ENCODE measurements at regions of chr2 and their contacts with region 1.

Region 1: GRCh38 chr2:120735746-120736170 is at the start of gene GLI2:
- DNase-seq: peak; percentile 50 to 90
- H3K4me3 ChIP-seq: peak within 1 kb of the TSS; percentile 80 to 91 (median 89)
- H3K27ac ChIP-seq: peak within 1 kb of the TSS; percentile 79; the same call in 1 of the 2 replicates
- H3K4me1 ChIP-seq: peaks cover 12 to 24% (median 16%) of the 10 kb centered on the region in 4 experiments
- H3K27me3 ChIP-seq: no peaks in the 10 kb centered on the region; a peak in 1 of 7 replicates
- CTCF ChIP-seq: peak; percentile 66 to 98 (median 83)
- EP300 ChIP-seq: no peak
- POLR2A ChIP-seq: no peak
- RAD21 ChIP-seq: peak; percentile 60 to 78
- total RNA-seq, gene GLI2: 46.9 and 49.8 TPM in 2 replicates

Region 2: GRCh38 chr2:120647491-120647890 is 88.3 kb before region 1 on chr2:
- CTCF ChIA-PET with region 1: no interaction called
- POLR2A ChIA-PET with region 1: no interaction called
- DNase-seq: no peak
- H3K4me3 ChIP-seq: no peak overlapping the region
- H3K27ac ChIP-seq: no peak overlapping the region
- H3K4me1 ChIP-seq: no peaks in the 10 kb centered on the region
- H3K27me3 ChIP-seq: peaks cover 0 to 3% (median 1%) of the 10 kb centered on the region in 4 experiments; a peak in 1 of 7 replicates
- CTCF ChIP-seq: no peak
- EP300 ChIP-seq: no peak
- POLR2A ChIP-seq: no peak
- RAD21 ChIP-seq: no peak

Region 3: DNA sequence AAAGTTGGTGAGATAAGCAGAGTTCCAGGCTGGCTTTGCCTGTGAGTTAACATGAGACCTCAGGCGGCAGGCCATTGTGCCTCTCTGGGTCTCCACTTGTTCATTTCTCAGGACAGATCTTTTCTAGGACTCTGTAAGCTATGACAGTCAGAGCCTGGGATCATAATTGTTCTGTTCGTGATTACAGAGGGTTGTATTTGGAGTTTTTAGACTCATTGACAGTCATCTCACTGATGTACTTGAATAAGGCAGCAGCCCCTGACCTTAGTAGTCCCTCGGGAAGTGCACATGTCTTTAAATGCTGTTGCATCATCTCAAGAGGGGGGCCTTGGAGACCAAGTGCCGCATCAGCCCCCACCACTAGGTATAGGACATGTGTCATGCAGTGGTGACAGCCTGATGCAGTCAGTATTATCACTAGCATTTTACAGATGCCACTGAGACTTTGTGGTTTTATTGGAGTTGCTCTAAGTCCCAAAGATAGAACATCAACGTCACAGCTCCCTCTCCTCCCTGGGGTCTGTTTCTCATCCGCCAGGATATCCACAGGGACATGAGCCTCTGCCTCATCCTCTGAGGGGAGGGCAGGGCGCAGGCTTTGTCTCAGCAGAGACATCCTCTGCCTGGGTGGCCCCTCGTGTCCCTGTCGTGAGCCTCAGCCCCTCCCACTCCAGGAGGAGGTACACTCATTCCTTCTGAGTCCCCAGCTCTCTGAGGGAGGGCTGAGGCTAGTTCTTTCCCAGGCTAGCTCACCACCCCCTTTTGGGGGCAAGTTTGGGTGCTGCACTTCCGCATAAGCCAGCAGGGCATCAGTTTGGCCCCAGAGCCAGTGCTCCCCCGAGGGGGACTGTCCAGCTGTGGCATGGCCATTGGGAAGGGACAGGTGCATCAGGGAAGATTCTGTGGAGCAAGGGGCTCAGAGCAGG is 14.0 kb after region 1 on chr2:
- CTCF ChIA-PET with region 1: interaction called, 4 read pairs
- POLR2A ChIA-PET with region 1: interaction called, 15 read pairs
- DNase-seq: peak in 1 of 2 experiments; percentile 52
- H3K4me3 ChIP-seq: no peak overlapping the region; a peak in 1 of 8 replicates
- H3K27ac ChIP-seq: no peak overlapping the region; the same call in 1 of the 2 replicates
- H3K4me1 ChIP-seq: peaks cover 8 to 19% (median 15%) of the 10 kb centered on the region in 4 experiments
- H3K27me3 ChIP-seq: no peaks in the 10 kb centered on the region
- CTCF ChIP-seq: no peak
- EP300 ChIP-seq: no peak
- POLR2A ChIP-seq: no peak
- RAD21 ChIP-seq: no peak

Region 4: DNA sequence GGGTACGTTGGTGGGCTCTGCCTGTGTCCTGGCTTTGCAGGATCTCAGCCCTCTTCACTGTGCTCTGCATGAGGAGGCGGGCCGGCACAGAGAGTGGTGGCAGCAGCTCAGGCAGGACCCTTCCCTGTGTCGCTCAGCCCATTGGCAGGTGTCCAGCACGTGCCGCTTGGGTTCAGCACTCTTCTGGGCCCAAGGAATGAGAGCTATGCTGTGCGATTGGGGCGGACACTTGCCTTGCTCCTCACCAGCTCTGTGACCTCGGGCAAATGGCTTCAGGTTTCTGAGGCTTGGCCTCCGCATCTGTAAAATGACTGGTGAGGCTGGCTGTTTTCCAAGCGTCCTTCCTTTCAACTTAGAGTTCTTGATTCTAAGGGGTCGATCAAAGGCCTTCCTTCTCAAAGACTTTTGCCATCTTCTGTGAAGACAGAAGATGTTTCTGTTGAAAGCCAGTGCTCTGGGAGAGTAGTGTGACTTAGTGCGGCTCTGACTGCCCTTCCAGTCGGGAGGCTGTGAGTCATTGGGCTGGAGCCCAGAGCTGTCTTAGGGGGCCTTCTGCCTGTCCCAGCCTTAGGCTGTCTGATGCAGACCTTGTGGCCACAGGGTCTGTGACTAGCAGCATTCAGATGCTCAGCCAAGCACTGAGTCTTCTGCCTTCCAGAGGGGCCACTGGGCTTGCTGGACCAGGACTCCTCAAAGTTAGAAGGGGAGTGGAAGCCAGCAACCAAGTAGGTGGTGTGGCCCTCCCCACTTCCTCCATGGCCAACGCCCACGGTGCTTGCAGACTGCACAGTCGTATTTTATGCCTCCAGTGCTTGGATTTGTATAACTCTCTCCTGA is 35.6 kb after region 1 on chr2:
- CTCF ChIA-PET with region 1: interaction called, 12 read pairs
- POLR2A ChIA-PET with region 1: interaction called, 8 read pairs
- DNase-seq: no peak
- H3K4me3 ChIP-seq: no peak overlapping the region
- H3K27ac ChIP-seq: no peak overlapping the region
- H3K4me1 ChIP-seq: peaks cover 20 to 58% (median 30%) of the 10 kb centered on the region in 4 experiments
- H3K27me3 ChIP-seq: no peaks in the 10 kb centered on the region
- CTCF ChIP-seq: no peak
- EP300 ChIP-seq: no peak
- POLR2A ChIP-seq: no peak
- RAD21 ChIP-seq: no peak

Region 5: GRCh38 chr2:120786559-120786960 is 50.8 kb after region 1 on chr2:
- CTCF ChIA-PET with region 1: interaction called, 11 read pairs
- POLR2A ChIA-PET with region 1: interaction called, 13 read pairs
- DNase-seq: peak; percentile 60 to 64
- H3K4me3 ChIP-seq: 0 out of 8 replicates have a peak overlapping the region, but pooled peaks of 1 of the 4 experiments have one; percentile 13
- H3K27ac ChIP-seq: no peak overlapping the region; the same call in 1 of the 2 replicates
- H3K4me1 ChIP-seq: peaks cover 15 to 64% (median 51%) of the 10 kb centered on the region in 4 experiments
- H3K27me3 ChIP-seq: no peaks in the 10 kb centered on the region
- CTCF ChIP-seq: no peak
- EP300 ChIP-seq: peak in 1 of 2 experiments; percentile 59; a peak in 1 of 3 replicates
- POLR2A ChIP-seq: no peak
- RAD21 ChIP-seq: no peak; a peak in 1 of 4 replicates

Measured in H1 (cell line).